CD4-positive, alpha-beta memory T cell (primary cell): ENCODE measurements at regions of chr6 and their contacts with region 1.

Region 1: DNA sequence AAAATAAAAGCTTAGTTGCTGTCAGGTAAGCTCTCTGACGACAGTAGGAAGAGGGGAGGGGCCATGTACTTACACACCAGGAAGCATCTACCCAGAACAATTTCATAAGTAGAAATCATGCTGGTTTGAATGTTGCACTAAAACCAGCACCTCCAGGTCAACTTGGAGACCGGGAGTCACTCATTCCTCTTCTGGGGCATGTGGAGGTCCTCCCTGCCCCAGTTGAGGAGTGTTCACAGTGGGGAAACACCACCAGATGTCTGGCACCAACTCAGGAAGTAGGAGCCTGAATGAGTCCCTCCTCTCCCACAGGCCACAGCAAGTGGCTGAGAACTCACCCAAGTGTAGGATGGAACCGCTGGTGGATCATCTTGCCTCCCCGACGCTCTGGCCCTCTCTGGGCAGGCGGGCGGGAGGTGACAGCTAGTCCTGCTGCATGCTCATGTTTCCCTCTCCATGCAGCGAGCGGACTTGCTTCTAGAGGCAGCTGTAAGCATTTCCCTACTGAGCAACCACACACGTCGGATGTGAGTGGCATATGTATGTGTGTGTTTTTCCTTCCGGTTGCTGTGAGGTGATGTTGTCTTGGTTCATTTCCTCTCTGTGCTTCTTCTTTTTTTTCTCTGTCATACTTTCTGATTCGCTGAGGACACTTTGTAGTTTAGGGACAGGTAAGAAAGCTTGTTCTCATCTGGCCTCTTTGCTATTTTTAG is 149.5 kb upstream of the NEDD9 start:
- DNase-seq: peak; percentile 81 to 92 (median 88)
- H3K4me3 ChIP-seq: peak overlapping the region; percentile 66 to 82
- H3K4me3 Mint-ChIP-seq: peak overlapping the region; percentile 87 to 96 (median 94)
- H3K27ac ChIP-seq: peak overlapping the region; percentile 73
- H3K27ac Mint-ChIP-seq: peak overlapping the region; percentile 91 to 98 (median 96)
- H3K4me1 ChIP-seq: peaks cover 49% of the 10 kb centered on the region
- H3K4me1 Mint-ChIP-seq: peaks cover 49 to 75% (median 58%) of the 10 kb centered on the region in 4 donors
- H3K27me3 ChIP-seq: no peaks in the 10 kb centered on the region
- H3K27me3 Mint-ChIP-seq: no peaks in the 10 kb centered on the region

Region 2: GRCh38 chr6:11093589-11094410 is 288.2 kb before region 1 on chr6 and contains the start of gene SMIM13:
- CTCF ChIA-PET with region 1: interaction called, 3 read pairs
- POLR2A ChIA-PET with region 1: interaction called, 4 read pairs
- intact Hi-C with region 1: loop called (anchors 5 kb)
- DNase-seq: peak; percentile 92 to 96 (median 92)
- H3K4me3 ChIP-seq: peak within 1 kb of the TSS; percentile 78 to 82
- H3K4me3 Mint-ChIP-seq: peak within 1 kb of the TSS; percentile 97 to 99 (median 98)
- H3K27ac ChIP-seq: peak within 1 kb of the TSS; percentile 93
- H3K27ac Mint-ChIP-seq: peak within 1 kb of the TSS; percentile 92 to 98 (median 98)
- H3K4me1 ChIP-seq: peaks cover 26% of the 10 kb centered on the region
- H3K4me1 Mint-ChIP-seq: peaks cover 26 to 38% (median 32%) of the 10 kb centered on the region in 4 donors
- H3K27me3 ChIP-seq: no peaks in the 10 kb centered on the region
- H3K27me3 Mint-ChIP-seq: no peaks in the 10 kb centered on the region
- total RNA-seq, gene SMIM13: 5.4 to 6.1 TPM

Region 3: DNA sequence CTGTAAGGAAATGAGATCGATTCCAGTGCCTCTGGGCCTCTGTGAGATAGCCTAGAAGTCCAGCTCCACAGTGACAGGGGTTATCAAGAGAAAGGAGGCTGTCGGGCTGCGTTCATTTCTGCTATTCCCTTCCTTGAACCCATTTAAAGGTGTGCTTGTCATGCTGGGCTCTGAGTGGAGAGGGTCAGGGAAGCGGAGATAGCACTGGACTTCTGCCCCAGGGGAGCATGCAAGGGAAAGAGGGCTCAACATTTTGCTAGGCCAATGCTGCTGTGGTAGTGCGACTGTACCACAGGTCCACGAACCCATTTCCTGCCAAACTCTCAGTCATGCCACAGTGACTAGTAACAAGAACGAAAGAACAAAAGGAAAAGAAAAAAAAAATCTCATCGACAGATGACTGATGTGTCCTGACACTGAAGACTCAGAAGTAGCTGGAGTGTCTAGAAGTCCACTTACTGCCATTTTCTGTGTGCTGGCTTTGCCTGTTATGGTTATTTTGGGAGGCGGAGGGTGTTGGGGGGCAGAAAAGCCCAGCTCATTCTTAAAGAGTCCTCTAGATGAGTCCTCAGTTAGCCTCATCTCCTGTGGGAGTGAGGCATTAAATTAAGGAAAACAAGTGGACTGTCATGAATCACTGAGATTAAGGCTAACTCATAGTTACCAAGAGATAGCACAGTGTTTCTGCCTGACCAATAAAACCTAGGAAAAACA is 157.5 kb before region 1 on chr6:
- CTCF ChIA-PET with region 1: no interaction called
- POLR2A ChIA-PET with region 1: interaction called, 42 read pairs
- intact Hi-C with region 1: no loop called
- DNase-seq: peak; percentile 58 to 69 (median 61)
- H3K4me3 ChIP-seq: peak overlapping the region in 1 of 2 donors; percentile 54
- H3K4me3 Mint-ChIP-seq: peak overlapping the region; percentile 66 to 89 (median 83)
- H3K27ac ChIP-seq: peak overlapping the region; percentile 43
- H3K27ac Mint-ChIP-seq: peak overlapping the region; percentile 80 to 97 (median 96)
- H3K4me1 ChIP-seq: peaks cover 45% of the 10 kb centered on the region
- H3K4me1 Mint-ChIP-seq: peaks cover 34 to 70% (median 45%) of the 10 kb centered on the region in 4 donors
- H3K27me3 ChIP-seq: no peaks in the 10 kb centered on the region
- H3K27me3 Mint-ChIP-seq: no peaks in the 10 kb centered on the region

Region 4: GRCh38 chr6:11317885-11318771 is 63.8 kb before region 1 on chr6:
- CTCF ChIA-PET with region 1: interaction called, 5 read pairs
- POLR2A ChIA-PET with region 1: interaction called, 5 read pairs
- intact Hi-C with region 1: loop called (anchors 1 kb)
- DNase-seq: peak; percentile 55 to 89 (median 74)
- H3K4me3 ChIP-seq: no peak overlapping the region
- H3K4me3 Mint-ChIP-seq: peak overlapping the region in 7 of 8 donors; percentile 3 to 49 (median 27)
- H3K27ac ChIP-seq: peak overlapping the region; percentile 42
- H3K27ac Mint-ChIP-seq: peak overlapping the region; percentile 79 to 96 (median 91)
- H3K4me1 ChIP-seq: peaks cover 26% of the 10 kb centered on the region
- H3K4me1 Mint-ChIP-seq: peaks cover 33 to 58% (median 42%) of the 10 kb centered on the region in 4 donors
- H3K27me3 ChIP-seq: no peaks in the 10 kb centered on the region
- H3K27me3 Mint-ChIP-seq: no peaks in the 10 kb centered on the region

Region 5: DNA sequence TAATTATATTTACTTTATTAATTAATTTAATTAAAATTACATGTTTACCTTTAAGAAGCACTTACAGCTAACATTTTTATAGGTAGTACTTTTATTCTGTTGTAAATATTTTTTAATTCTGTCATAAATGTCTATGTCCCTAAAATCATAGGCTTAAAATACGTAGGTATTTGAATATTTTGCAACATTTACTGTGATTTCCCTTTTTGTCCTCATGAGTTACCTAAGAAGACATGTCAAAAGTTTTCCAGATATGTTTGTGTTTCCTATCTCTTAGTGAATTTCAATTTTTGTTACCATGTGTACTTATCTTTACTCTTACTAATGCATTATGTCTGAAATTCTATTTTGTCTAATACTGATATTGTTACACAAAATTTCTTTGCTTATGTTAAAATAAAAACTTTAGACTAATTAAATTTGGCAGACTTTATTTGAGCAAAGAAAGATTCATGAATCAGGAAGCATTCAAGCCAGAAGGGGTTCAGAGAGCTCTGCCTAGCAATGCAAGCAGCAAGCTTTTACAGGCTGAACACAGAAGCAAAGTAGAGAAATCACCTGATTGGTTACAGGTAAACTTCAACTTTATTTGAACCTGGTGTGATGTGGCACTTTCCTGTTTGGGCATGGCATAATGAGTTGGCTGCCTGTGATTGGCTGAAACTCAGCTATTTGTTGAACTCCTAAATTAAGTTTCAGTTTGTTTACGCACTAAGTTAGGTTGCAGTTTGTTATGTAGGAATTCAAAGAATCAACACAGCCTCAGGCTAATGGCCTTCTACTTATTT is 32.4 kb after region 1 on chr6:
- CTCF ChIA-PET with region 1: interaction called, 8 read pairs
- POLR2A ChIA-PET with region 1: interaction called, 27 read pairs
- intact Hi-C with region 1: loop called (anchors 2 kb)
- DNase-seq: peak; percentile 68 to 81 (median 77)
- H3K4me3 ChIP-seq: no peak overlapping the region
- H3K4me3 Mint-ChIP-seq: peak overlapping the region; percentile 30 to 71 (median 64)
- H3K27ac ChIP-seq: no peak overlapping the region
- H3K27ac Mint-ChIP-seq: peak overlapping the region; percentile 17 to 93 (median 78)
- H3K4me1 ChIP-seq: peaks cover 34% of the 10 kb centered on the region
- H3K4me1 Mint-ChIP-seq: peaks cover 19 to 37% (median 25%) of the 10 kb centered on the region in 4 donors
- H3K27me3 ChIP-seq: no peaks in the 10 kb centered on the region
- H3K27me3 Mint-ChIP-seq: no peaks in the 10 kb centered on the region

Region 6: DNA sequence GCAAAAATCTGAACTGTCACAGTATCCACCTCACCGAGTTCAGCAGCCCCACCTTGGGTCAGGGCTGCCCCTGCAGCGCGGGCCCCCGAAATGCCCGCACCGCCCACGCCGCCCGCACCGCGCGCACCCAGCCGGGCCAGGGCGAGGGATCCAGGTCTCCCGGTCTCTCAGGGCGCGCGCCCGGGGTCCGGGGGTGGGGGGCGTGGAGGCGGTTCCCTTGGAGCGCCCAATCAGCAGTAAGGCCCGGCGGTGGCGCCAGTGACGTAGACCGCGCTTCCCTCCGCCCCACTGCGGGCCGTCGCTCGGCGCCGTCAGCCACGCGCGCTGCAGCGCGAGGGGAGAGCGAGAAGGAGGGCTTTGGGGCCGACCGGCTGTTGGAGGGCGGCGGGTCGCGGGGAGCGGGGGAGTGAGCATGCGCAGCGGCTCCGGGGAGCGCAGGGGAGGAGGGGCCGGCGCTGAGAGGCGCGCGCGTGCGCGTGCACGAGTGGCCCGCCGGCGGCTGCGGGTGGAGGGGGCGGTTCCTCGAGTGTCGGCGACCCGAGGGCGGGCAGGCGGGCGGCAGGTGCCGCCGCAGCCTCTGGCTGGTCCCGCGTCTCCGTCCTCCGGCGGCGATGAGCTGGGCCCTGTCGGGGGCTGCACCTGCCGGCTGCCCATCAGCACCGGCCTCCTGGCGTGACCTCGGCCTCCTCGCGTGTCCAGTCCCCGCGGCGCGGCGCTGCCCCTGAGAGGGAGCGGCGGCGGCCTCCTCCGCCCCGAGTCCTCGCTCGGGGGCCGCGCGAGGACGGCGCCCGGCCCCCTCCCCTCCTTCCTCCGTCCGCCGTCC is 155.5 kb after region 1 on chr6 and contains the start of gene TMEM170B:
- CTCF ChIA-PET with region 1: no interaction called
- POLR2A ChIA-PET with region 1: interaction called, 4 read pairs
- intact Hi-C with region 1: loop called (anchors 1 kb)
- DNase-seq: peak; percentile 94 to 98 (median 97)
- H3K4me3 ChIP-seq: peak within 1 kb of the TSS; percentile 60 to 77
- H3K4me3 Mint-ChIP-seq: peak within 1 kb of the TSS; percentile 86 to 92 (median 90)
- H3K27ac ChIP-seq: peak within 1 kb of the TSS; percentile 54
- H3K27ac Mint-ChIP-seq: peak within 1 kb of the TSS; percentile 72 to 94 (median 92)
- H3K4me1 ChIP-seq: peaks cover 11% of the 10 kb centered on the region
- H3K4me1 Mint-ChIP-seq: peaks cover 7 to 24% (median 9%) of the 10 kb centered on the region in 4 donors
- H3K27me3 ChIP-seq: no peaks in the 10 kb centered on the region
- H3K27me3 Mint-ChIP-seq: peaks cover 2 to 4% of the 10 kb centered on the region in 2 donors
- total RNA-seq, gene TMEM170B: 1.9 to 2.1 TPM